Activated T-helper 2 cell treated with anti-CD3 and anti-CD28 coated beads, Interferon-gamma antibody, Interleukin-2, Interleukin-4, amounts not matched to agents 10 μg/mL and 5 μg/mL and 100 μg/mL, durations not matched to agents 14 hours and 24 hours and 36 hours (primary cell): ENCODE measurements at regions of chr2 and their contacts with region 1.

Region 1: GRCh38 chr2:15939854-15940660 is at the start of gene MYCN:
- DNase-seq: peak; percentile 14
- H3K4me3 Mint-ChIP-seq: peak within 1 kb of the TSS; percentile 42
- H3K27ac Mint-ChIP-seq: no peak within 1 kb of the TSS
- H3K4me1 Mint-ChIP-seq: peaks cover 5% of the 10 kb centered on the region
- H3K27me3 Mint-ChIP-seq: peaks cover 66% of the 10 kb centered on the region
- total RNA-seq, gene MYCN: not detected in 2 replicates

Region 2: DNA sequence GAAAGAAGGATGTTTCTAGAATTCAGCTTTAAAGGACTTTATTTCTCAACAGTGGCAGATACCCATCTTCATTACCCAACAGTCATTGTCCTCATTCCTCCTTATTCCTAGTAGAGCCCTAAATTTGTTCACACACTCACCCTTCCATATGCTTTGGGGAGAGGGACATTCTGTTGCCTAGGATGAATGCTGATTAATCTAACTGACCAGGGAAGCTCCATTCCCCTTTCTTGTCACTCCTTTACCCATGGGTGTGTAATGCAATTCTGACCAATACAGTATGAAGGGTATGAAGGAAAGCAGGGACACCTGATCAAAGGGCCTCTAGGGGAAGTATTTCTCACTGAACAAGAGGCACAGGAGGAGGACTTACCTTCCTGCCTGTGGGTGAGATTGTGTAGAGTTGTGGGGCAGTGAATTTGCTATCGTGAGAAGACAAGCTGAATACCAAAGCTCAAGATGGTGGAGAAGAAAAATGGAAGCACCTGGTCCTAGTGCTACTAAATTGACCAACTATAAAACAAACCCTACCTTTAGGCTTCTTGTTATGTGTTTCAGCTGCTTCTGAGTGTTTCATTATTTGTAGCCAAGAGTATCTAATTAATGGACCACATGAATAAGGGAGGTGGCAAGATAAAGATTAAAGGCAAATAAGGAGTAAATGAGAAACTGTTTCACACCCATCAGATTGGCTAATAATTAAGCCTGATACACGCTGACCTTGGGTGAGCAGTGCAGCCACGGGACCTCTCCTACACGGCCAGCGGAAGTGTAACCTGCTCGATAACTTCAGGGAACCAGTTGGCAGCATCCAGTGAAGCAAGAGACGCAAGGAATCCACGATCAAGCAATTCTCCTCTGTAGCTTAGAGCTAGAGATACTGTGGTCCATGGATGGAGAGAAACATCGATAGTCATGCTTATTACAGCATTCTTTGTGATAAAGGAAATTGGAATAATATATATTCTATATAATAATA is 202.6 kb after region 1 on chr2:
- intact Hi-C with region 1: loop called (anchors 5 kb)
- DNase-seq: no peak
- H3K4me3 Mint-ChIP-seq: no peak overlapping the region
- H3K27ac Mint-ChIP-seq: no peak overlapping the region
- H3K4me1 Mint-ChIP-seq: no peaks in the 10 kb centered on the region
- H3K27me3 Mint-ChIP-seq: no peaks in the 10 kb centered on the region

Region 3: DNA sequence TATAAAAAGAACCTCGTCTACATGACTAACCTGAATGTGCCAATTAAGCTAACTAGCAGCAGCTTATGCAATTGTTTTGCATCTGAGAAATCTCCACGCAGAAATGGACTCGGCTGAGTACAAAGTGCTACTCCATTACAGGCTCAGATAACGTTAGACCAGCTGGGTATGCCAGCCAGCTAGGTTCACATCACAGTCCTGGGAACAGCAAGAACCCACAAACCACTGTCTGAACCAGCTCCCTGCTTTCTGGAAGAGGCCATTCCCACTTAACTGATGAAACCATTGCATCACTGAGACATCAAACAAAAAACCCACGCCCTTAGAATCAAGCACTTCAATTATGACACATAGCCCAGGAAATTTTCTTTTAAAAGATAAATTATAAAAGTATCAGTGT is 522.9 kb after region 1 on chr2:
- intact Hi-C with region 1: loop called (anchors 10 kb)
- DNase-seq: no peak
- H3K4me3 Mint-ChIP-seq: no peak overlapping the region
- H3K27ac Mint-ChIP-seq: no peak overlapping the region
- H3K4me1 Mint-ChIP-seq: peaks cover 18% of the 10 kb centered on the region
- H3K27me3 Mint-ChIP-seq: peaks cover 23% of the 10 kb centered on the region

Region 4: DNA sequence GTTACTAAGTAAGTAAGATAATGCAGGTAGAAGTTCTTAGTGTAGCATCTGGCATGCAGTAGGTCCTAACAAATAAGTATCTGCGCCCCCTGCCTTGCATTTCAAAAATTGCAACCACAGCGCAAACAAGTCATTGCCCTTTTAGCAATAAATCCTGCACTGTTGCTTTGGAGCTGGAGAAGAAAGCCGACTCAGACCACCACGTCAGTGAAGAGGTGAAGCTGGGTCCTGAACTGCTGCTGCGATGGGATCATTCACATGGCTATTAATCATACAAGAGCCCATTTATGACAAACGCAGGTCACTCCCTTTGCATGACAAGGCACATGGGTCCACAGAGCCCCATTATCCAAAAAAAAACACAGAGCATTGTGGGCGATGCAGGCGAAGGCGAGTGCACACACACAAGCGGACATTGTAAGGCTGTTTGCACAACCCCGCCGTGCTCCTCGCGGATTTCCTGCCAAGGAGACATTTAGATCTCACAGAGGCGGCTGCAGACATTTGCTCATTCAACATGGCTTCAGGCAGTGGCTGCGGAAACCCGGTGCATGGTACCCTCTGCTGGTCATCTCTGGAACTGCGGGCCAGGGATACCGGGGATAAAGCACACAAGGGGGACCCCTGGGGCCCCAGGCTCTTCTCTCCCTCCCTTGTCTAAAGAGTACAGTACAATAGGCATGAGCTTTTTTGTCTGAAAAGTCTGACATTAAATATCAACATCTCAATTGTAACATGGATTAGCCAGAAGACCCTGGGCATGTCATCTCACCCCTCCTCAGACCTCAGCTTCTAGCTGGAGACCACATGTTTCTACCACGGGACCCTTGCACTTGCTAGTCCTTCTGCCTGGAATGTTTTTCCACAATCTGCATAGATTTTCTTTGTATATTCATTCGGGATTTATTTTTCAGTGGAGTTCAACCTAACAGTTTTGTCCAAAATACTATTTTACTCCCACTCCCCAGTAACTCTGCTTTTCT is 668.9 kb after region 1 on chr2:
- intact Hi-C with region 1: loop called (anchors 1 kb)
- DNase-seq: peak; percentile 79
- H3K4me3 Mint-ChIP-seq: peak overlapping the region; percentile 79
- H3K27ac Mint-ChIP-seq: peak overlapping the region; percentile 49
- H3K4me1 Mint-ChIP-seq: peaks cover 12% of the 10 kb centered on the region
- H3K27me3 Mint-ChIP-seq: no peaks in the 10 kb centered on the region

Region 5: GRCh38 chr2:17538844-17539554 is 1598.9 kb after region 1 on chr2:
- intact Hi-C with region 1: loop called (anchors 5 kb)
- DNase-seq: no peak
- H3K4me3 Mint-ChIP-seq: no peak overlapping the region
- H3K27ac Mint-ChIP-seq: no peak overlapping the region
- H3K4me1 Mint-ChIP-seq: peaks cover 8% of the 10 kb centered on the region
- H3K27me3 Mint-ChIP-seq: peaks cover 66% of the 10 kb centered on the region